Activated naive CD4-positive, alpha-beta T cell treated with anti-CD3 and anti-CD28 coated beads for 36 hours (primary cell): ENCODE measurements at regions of chr9 and their contacts with region 1.

Region 1: DNA sequence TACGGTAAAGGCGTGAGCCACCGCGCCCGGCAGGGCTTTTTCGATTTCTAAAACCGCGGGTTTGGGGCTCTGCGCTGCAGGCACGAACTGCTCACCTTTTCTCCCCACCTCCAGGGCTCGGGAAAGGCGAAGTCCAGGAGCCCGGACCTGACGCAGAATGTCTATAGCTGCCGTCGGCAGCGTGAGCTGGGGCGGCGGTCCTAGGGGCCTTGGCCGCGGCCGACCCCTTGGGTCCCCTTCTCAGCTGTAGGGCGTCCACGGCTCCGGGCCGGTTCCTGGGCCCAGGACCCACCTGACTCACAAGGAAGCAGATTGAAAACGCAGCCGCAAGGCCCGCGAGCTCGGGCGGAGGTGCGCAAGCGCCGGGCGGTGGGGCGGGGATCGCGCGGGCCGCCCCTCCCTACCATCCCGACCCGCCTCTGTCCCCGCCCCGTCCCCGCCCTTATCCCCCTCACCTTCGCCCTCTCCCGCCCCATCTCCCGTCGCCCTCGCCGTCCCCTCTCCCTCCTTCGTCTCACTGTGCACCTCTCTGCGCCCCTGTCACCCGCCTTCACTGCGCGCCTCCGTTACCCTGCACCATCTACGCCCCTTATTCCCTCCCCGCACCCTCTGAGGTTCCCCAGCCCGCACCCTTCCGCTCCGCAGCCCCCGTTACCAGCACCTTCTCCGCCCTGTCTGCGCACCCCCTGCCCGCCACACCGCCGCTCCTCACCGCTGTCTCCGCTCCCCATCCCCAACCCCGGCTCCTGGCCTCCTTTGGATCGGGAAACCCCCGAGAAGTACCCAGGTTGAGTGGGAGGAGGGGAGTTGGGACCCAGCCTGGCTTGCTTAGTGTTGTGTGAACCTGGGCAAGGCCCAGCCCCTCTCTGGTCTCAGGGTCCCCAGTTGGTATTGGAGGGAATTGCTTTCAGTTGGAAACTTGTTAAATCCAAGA is at the start of gene HDHD3:
- DNase-seq: peak; percentile 82
- H3K4me3 Mint-ChIP-seq: peak within 1 kb of the TSS; percentile 81
- H3K27ac Mint-ChIP-seq: peak within 1 kb of the TSS; percentile 77
- H3K4me1 Mint-ChIP-seq: peaks cover 17% of the 10 kb centered on the region
- H3K27me3 Mint-ChIP-seq: no peaks in the 10 kb centered on the region
- total RNA-seq, gene HDHD3: 8.9 to 9.5 TPM

Region 2: GRCh38 chr9:113309204-113309813 is 67.6 kb before region 1 on chr9:
- CTCF ChIA-PET with region 1: no interaction called
- intact Hi-C with region 1: loop called (anchors 1 kb)
- DNase-seq: peak; percentile 53
- H3K4me3 Mint-ChIP-seq: no peak overlapping the region
- H3K27ac Mint-ChIP-seq: no peak overlapping the region
- H3K4me1 Mint-ChIP-seq: no peaks in the 10 kb centered on the region
- H3K27me3 Mint-ChIP-seq: no peaks in the 10 kb centered on the region

Region 3: GRCh38 chr9:113340017-113340699 is 36.7 kb before region 1 on chr9 and contains the start of gene WDR31:
- CTCF ChIA-PET with region 1: no interaction called
- intact Hi-C with region 1: loop called (anchors 1 kb)
- DNase-seq: peak; percentile 85
- H3K4me3 Mint-ChIP-seq: peak within 1 kb of the TSS; percentile 84
- H3K27ac Mint-ChIP-seq: peak within 1 kb of the TSS; percentile 55
- H3K4me1 Mint-ChIP-seq: peaks cover 35% of the 10 kb centered on the region
- H3K27me3 Mint-ChIP-seq: peaks cover 4% of the 10 kb centered on the region
- total RNA-seq, gene WDR31: 0.81 to 0.88 TPM

Region 4: DNA sequence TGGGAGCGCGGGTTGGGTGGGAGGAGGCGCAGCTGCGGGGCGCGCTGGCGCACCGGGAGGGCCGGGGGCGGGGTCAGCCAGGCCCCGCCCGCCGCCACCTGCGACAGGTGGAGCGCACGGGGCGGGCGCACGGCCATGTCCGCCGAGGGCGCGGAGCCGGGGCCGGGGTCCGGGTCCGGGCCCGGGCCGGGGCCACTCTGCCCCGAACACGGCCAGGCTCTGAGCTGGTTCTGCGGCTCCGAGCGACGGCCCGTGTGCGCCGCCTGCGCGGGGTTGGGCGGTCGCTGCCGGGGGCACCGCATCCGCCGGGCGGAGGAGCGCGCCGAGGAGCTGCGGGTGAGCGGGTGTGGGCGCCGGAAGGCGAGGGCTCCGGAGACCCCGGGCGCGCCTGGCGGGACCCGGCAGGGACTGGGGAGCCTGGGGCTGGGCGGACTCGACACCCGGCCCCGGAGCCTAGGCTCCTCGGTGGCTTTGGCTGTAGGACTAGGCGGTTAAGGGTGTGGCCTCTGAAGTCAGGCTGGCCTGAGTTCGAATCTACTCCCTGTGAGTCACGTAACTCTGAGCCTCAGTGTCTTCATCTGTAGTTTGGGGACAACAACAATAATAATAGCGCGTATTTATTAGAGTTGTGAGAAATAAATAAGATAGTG is 27.3 kb before region 1 on chr9 and contains the start of gene BSPRY:
- CTCF ChIA-PET with region 1: interaction called, 3 read pairs
- intact Hi-C with region 1: loop called (anchors 1 kb)
- DNase-seq: peak; percentile 42
- H3K4me3 Mint-ChIP-seq: peak within 1 kb of the TSS; percentile 87
- H3K27ac Mint-ChIP-seq: peak within 1 kb of the TSS; percentile 84
- H3K4me1 Mint-ChIP-seq: peaks cover 61% of the 10 kb centered on the region
- H3K27me3 Mint-ChIP-seq: peaks cover 26% of the 10 kb centered on the region
- total RNA-seq, gene BSPRY: 7.7 to 8.3 TPM

Region 5: GRCh38 chr9:113401027-113401792 is 24.3 kb after region 1 on chr9 and contains the start of gene ALAD:
- CTCF ChIA-PET with region 1: interaction called, 3 read pairs
- intact Hi-C with region 1: loop called (anchors 2 kb)
- DNase-seq: peak; percentile 99
- H3K4me3 Mint-ChIP-seq: peak within 1 kb of the TSS; percentile 93
- H3K27ac Mint-ChIP-seq: no peak within 1 kb of the TSS
- H3K4me1 Mint-ChIP-seq: peaks cover 20% of the 10 kb centered on the region
- H3K27me3 Mint-ChIP-seq: no peaks in the 10 kb centered on the region
- total RNA-seq, gene ALAD: 16.1 to 17.7 TPM

Region 6: DNA sequence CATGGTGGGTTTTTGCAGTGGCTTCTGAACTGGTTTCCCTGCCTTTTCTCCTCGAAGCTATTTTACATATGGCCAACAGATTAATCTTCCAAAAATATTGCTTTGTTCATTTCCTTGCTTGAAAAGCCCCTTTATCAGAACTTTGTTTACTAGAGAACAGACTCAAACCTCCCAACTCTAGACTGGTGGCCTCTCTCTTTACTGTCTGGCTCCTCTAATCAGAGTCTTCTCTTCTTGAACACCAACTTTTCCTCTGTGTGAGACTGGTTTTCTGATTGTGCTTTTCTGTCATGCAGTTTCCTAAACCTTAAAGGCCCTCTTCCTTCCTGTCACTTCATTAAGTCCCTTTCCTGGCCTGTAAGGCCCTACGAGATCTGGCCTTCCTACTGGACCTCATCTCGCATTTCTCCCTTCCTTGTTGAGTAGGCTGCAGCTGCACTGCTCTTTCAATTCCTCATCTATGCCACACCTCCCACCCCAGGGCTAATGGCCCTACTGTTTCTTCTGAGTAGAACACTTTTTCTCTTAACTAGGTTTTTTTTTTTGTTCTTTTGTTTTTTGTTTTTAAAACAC is 39.3 kb after region 1 on chr9:
- CTCF ChIA-PET with region 1: no interaction called
- intact Hi-C with region 1: no loop called
- DNase-seq: no peak
- H3K4me3 Mint-ChIP-seq: no peak overlapping the region
- H3K27ac Mint-ChIP-seq: no peak overlapping the region
- H3K4me1 Mint-ChIP-seq: peaks cover 6% of the 10 kb centered on the region
- H3K27me3 Mint-ChIP-seq: no peaks in the 10 kb centered on the region

Region 7: GRCh38 chr9:115006660-115007059 is 1629.8 kb after region 1 on chr9:
- CTCF ChIA-PET with region 1: no interaction called
- intact Hi-C with region 1: no loop called
- DNase-seq: peak; percentile 69
- H3K4me3 Mint-ChIP-seq: no peak overlapping the region
- H3K27ac Mint-ChIP-seq: no peak overlapping the region
- H3K4me1 Mint-ChIP-seq: peaks cover 71% of the 10 kb centered on the region
- H3K27me3 Mint-ChIP-seq: no peaks in the 10 kb centered on the region